CD4-positive, alpha-beta memory T cell (primary cell): ENCODE measurements at regions of chr19 and their contacts with region 1.

Region 1: GRCh38 chr19:46600384-46601317 is 479 bp upstream of the CALM3 start:
- DNase-seq: peak; percentile 97 to 99 (median 98)
- H3K4me3 ChIP-seq: peak overlapping the region; percentile 80 to 90
- H3K4me3 Mint-ChIP-seq: peak overlapping the region; percentile 98 to 99 (median 99)
- H3K27ac ChIP-seq: peak overlapping the region; percentile 97
- H3K27ac Mint-ChIP-seq: peak overlapping the region; percentile 100
- H3K4me1 ChIP-seq: peaks cover 36% of the 10 kb centered on the region
- H3K4me1 Mint-ChIP-seq: peaks cover 10 to 46% (median 30%) of the 10 kb centered on the region in 4 donors
- H3K27me3 ChIP-seq: no peaks in the 10 kb centered on the region
- H3K27me3 Mint-ChIP-seq: peaks cover 0 to 4% of the 10 kb centered on the region in 2 donors

Region 2: DNA sequence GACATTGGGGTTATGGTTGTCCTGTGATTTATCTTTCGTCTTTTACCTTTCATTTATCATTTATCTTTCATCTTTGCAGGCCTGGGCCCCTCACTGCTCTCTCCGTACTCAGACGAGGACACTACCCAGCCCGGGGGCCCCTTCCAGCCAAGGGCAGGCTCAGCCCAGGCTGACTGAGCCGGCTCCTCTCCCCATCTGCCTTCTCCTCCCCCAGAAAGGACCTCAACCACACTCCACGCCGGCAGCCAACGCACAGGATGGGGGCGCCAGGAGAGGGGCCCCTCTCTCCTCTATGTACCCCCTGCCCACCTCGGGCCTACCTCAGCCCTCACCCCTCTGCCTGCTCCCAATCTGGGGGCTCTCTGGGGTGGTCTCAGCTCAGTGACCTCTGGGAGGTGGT is 261.2 kb before region 1 on chr19:
- CTCF ChIA-PET with region 1: no interaction called
- POLR2A ChIA-PET with region 1: no interaction called
- intact Hi-C with region 1: no loop called
- DNase-seq: no peak
- H3K4me3 ChIP-seq: no peak overlapping the region
- H3K4me3 Mint-ChIP-seq: no peak overlapping the region
- H3K27ac ChIP-seq: no peak overlapping the region
- H3K27ac Mint-ChIP-seq: no peak overlapping the region
- H3K4me1 ChIP-seq: no peaks in the 10 kb centered on the region
- H3K4me1 Mint-ChIP-seq: no peaks in the 10 kb centered on the region
- H3K27me3 ChIP-seq: no peaks in the 10 kb centered on the region
- H3K27me3 Mint-ChIP-seq: peaks cover 0 to 2% of the 10 kb centered on the region in 2 donors

Region 3: GRCh38 chr19:46520616-46521015 is 80.0 kb before region 1 on chr19:
- CTCF ChIA-PET with region 1: interaction called, 3 read pairs
- POLR2A ChIA-PET with region 1: interaction called, 16 read pairs
- intact Hi-C with region 1: no loop called
- DNase-seq: no peak
- H3K4me3 ChIP-seq: no peak overlapping the region
- H3K4me3 Mint-ChIP-seq: peak overlapping the region in 1 of 8 donors; percentile 45
- H3K27ac ChIP-seq: no peak overlapping the region
- H3K27ac Mint-ChIP-seq: peak overlapping the region in 3 of 7 donors; percentile 22 to 81 (median 78)
- H3K4me1 ChIP-seq: peaks cover 57% of the 10 kb centered on the region
- H3K4me1 Mint-ChIP-seq: peaks cover 22 to 68% (median 45%) of the 10 kb centered on the region in 4 donors
- H3K27me3 ChIP-seq: no peaks in the 10 kb centered on the region
- H3K27me3 Mint-ChIP-seq: peaks cover 0 to 3% of the 10 kb centered on the region in 2 donors

Region 4: GRCh38 chr19:46634045-46634655 is 33.5 kb after region 1 on chr19:
- CTCF ChIA-PET with region 1: no interaction called
- POLR2A ChIA-PET with region 1: interaction called, 27 read pairs
- intact Hi-C with region 1: loop called (anchors 1 kb)
- DNase-seq: peak; percentile 93 to 98 (median 94)
- H3K4me3 ChIP-seq: peak overlapping the region; percentile 61 to 64
- H3K4me3 Mint-ChIP-seq: peak overlapping the region; percentile 68 to 88 (median 81)
- H3K27ac ChIP-seq: peak overlapping the region; percentile 57
- H3K27ac Mint-ChIP-seq: peak overlapping the region; percentile 87 to 94 (median 93)
- H3K4me1 ChIP-seq: peaks cover 33% of the 10 kb centered on the region
- H3K4me1 Mint-ChIP-seq: peaks cover 14 to 28% (median 22%) of the 10 kb centered on the region in 4 donors
- H3K27me3 ChIP-seq: no peaks in the 10 kb centered on the region
- H3K27me3 Mint-ChIP-seq: peaks cover 0 to 1% of the 10 kb centered on the region in 2 donors

Region 5: GRCh38 chr19:46717034-46717723 is 116.5 kb after region 1 on chr19 and contains the start of gene PRKD2:
- CTCF ChIA-PET with region 1: no interaction called
- POLR2A ChIA-PET with region 1: interaction called, 41 read pairs
- intact Hi-C with region 1: no loop called
- DNase-seq: peak; percentile 76 to 85 (median 79)
- H3K4me3 ChIP-seq: peak within 1 kb of the TSS; percentile 82 to 94
- H3K4me3 Mint-ChIP-seq: peak within 1 kb of the TSS; percentile 93 to 98 (median 94)
- H3K27ac ChIP-seq: peak within 1 kb of the TSS; percentile 95
- H3K27ac Mint-ChIP-seq: peak within 1 kb of the TSS; percentile 97 to 99 (median 98)
- H3K4me1 ChIP-seq: peaks cover 44% of the 10 kb centered on the region
- H3K4me1 Mint-ChIP-seq: peaks cover 23 to 64% (median 37%) of the 10 kb centered on the region in 4 donors
- H3K27me3 ChIP-seq: no peaks in the 10 kb centered on the region
- H3K27me3 Mint-ChIP-seq: no peaks in the 10 kb centered on the region
- total RNA-seq, gene PRKD2: 115 to 122 TPM